MCF 10A (cell line): ENCODE measurements at regions of chr1 and their contacts with region 1.

Region 1: DNA sequence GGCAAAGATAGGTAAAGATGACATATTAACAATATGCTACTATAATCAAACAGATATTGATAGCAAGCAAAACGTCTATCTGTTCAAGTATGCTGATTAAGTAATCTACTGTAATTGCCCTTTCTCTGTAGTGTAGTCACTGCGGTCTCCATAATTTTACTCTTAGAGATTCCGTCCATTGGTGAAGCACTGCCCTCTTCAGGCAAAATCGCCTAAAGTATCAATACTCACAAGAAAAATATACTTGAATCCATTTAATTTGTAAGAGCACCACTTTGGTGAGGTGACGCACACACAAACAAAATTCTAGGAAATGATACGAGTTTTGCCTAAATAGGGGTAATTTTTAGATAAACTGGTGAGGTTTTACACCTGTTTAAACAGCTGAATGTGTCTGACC is 434.6 kb upstream of the CHRM3 start:
- DNase-seq: peak; percentile 82
- H3K4me3 Mint-ChIP-seq: no peak overlapping the region
- H3K27ac Mint-ChIP-seq: no peak overlapping the region
- H3K4me1 Mint-ChIP-seq: peaks cover 12% of the 10 kb centered on the region
- H3K27me3 Mint-ChIP-seq: no peaks in the 10 kb centered on the region
- CTCF ChIP-seq: peak; percentile 89

Region 2: GRCh38 chr1:237809099-237809498 is 1142.7 kb before region 1 on chr1:
- CTCF ChIA-PET with region 1: interaction called, 15 read pairs
- POLR2A ChIA-PET with region 1: no interaction called
- intact Hi-C with region 1: no loop called
- DNase-seq: no peak
- H3K4me3 Mint-ChIP-seq: no peak overlapping the region
- H3K27ac Mint-ChIP-seq: no peak overlapping the region
- H3K4me1 Mint-ChIP-seq: no peaks in the 10 kb centered on the region
- H3K27me3 Mint-ChIP-seq: no peaks in the 10 kb centered on the region
- CTCF ChIP-seq: no peak

Region 3: GRCh38 chr1:238690415-238690814 is 261.4 kb before region 1 on chr1:
- CTCF ChIA-PET with region 1: no interaction called
- POLR2A ChIA-PET with region 1: no interaction called
- intact Hi-C with region 1: loop called (anchors 5 kb)
- DNase-seq: peak; percentile 61
- H3K4me3 Mint-ChIP-seq: no peak overlapping the region
- H3K27ac Mint-ChIP-seq: no peak overlapping the region
- H3K4me1 Mint-ChIP-seq: no peaks in the 10 kb centered on the region
- H3K27me3 Mint-ChIP-seq: no peaks in the 10 kb centered on the region
- CTCF ChIP-seq: peak; percentile 25

Region 4: DNA sequence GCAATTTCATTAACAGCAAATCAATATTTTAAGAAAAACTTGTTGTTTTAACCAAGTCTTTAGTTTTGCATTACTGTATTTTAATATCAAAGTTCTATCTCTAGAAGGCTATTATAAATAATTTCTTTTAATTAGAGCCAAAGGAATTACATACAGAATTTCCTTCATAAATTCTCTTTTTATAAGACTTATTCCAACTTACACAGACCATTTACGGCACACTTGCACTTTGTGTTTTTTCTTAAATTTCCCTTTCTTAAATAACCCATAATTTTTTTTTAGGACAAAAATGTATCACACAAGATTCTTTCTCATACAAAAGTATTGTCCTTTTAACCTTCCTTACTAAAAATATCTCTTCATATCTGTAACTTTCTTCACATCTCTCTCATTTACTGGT is 23.9 kb before region 1 on chr1:
- CTCF ChIA-PET with region 1: interaction called, 11 read pairs
- POLR2A ChIA-PET with region 1: no interaction called
- intact Hi-C with region 1: no loop called
- DNase-seq: no peak
- H3K4me3 Mint-ChIP-seq: no peak overlapping the region
- H3K27ac Mint-ChIP-seq: no peak overlapping the region
- H3K4me1 Mint-ChIP-seq: no peaks in the 10 kb centered on the region
- H3K27me3 Mint-ChIP-seq: no peaks in the 10 kb centered on the region
- CTCF ChIP-seq: no peak

Region 5: DNA sequence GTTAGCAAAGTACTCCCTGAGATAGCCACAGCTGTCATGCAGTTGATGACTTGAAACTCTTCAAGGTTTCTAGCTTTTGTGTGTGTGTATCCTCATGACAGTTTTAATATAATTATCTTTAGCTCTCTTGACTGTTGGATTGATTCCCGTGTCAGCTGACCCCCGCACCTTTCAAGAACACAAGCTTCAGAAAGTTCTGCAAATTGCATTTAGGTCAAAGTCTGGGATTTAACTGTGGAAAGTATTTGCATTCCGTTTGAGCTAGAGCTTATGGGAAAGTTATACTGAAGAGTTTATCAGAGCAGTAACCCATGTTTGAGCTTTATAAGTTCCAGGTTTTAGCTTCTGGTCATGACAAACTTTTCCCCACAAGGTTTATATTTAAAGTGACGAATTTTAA is 54.5 kb after region 1 on chr1:
- CTCF ChIA-PET with region 1: no interaction called
- POLR2A ChIA-PET with region 1: no interaction called
- intact Hi-C with region 1: no loop called
- DNase-seq: no peak
- H3K4me3 Mint-ChIP-seq: no peak overlapping the region
- H3K27ac Mint-ChIP-seq: no peak overlapping the region
- H3K4me1 Mint-ChIP-seq: no peaks in the 10 kb centered on the region
- H3K27me3 Mint-ChIP-seq: no peaks in the 10 kb centered on the region
- CTCF ChIP-seq: no peak